BJ (cell line): ENCODE measurements at regions of chr3 and their contacts with region 1.

Region 1: GRCh38 chr3:120245386-120245785 is 39.6 kb downstream of the GPR156 start:
- DNase-seq: no peak
- H3K4me3 ChIP-seq: no peak overlapping the region
- H3K27me3 ChIP-seq: peaks cover 3% of the 10 kb centered on the region; the same call in 1 of the 2 replicates
- CTCF ChIP-seq: no peak

Region 2: DNA sequence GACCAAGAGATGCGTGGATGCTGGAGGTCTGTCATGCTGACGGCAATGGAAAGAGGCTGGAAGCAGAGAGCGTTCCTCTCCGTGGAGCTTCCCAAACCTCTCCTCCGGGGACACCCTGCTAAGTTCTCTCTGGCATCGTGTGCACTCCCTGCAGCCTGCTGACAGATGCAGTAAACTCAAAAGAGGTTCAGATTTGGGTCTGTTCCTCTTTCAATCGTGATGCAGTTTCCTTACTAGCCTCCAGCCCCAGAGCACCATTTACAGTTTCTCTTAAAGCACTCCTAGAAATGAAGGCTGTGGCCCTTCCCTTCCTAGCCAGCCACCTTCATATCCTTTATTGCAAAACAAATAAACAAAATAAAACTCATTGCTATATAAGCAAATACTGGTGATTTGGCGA is 151.1 kb after region 1 on chr3:
- CTCF ChIA-PET with region 1: interaction called, 11 read pairs
- POLR2A ChIA-PET with region 1: no interaction called
- DNase-seq: no peak
- H3K4me3 ChIP-seq: no peak overlapping the region
- H3K27me3 ChIP-seq: no peaks in the 10 kb centered on the region
- CTCF ChIP-seq: no peak

Region 3: DNA sequence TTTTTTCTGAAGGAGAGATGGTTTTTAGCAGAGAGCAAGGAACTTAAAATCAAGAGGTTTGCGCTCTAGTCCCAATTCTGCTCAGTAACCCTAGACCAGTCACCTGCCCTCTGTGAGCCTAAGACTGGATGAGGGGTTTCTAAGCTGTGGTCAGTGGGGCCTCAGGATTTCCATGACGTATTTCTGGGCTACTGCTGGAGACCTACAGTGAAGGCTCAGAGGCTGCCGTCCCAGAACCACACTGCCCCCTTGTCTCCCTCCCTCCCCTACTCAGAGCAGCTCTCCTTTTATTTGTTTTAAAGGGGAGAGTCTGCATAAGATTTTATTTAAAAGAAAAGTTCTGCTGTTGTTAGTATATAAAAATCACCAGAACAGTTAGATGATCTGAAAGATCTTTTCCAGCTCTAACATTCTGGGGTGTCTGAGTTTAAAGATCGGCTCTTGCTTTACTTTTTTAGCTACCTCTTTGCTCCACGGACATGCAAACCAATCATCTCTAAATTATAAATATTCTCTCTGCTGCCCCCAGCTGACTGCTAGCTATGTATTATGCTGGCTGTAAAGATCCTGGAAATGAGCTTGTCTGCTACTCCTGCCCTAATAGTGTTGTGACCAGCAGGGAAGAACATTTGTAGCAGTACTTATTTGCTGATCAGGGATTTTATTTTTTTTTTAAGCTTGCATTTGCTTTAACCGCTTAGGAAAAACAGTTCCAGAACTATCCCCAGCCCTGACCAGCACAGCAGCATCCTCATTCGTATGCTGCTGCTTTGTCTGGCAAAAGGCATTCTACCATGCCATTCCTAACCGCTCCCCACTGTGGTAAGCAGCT is 322.2 kb after region 1 on chr3:
- CTCF ChIA-PET with region 1: interaction called, 18 read pairs
- POLR2A ChIA-PET with region 1: no interaction called
- DNase-seq: no peak
- H3K4me3 ChIP-seq: no peak overlapping the region
- H3K27me3 ChIP-seq: no peaks in the 10 kb centered on the region
- CTCF ChIP-seq: peak; percentile 55